ENCODE measurements at regions of chr1 and their contacts with region 1.

Region 1: GRCh38 chr1:62407405-62408009 is 29.3 kb upstream of the USP1 start:
- DNase-seq: no peak
- ATAC-seq: no peak

Region 2: DNA sequence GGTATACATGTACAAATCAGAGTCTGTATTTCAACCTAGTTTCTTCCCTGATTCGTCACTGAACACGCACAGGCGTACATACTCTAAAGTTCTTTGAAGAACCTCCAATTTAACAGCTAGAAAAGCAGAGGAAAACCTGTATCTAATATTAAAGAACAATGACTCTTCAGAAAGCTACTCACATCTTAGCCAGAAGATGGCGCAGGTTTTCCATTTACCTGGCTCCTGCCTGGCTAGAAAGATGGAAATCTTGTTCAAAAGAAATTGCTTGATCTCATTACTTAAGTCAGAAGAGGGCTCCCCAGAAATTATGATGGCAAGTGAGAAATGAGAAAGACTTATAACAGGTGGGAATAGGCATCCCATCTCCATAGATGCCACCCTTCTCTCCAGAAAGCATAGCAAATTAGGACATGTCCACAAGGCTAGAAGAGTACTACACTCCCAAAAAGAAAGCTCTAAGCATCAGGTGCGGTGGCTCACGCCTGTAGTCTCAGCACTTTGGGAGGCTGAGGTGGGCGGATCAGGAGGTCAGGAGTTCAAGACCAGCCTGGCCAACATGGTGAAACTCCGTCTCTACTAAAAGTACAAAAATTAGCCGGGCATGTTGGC is 231.8 kb before region 1 on chr1:
- intact Hi-C with region 1: loop called (anchors 2 kb)
- DNase-seq: no peak
- ATAC-seq: no peak

Measured in left ventricle myocardium superior (tissue), 1 donor.